Astrocyte of the cerebellum (primary cell): ENCODE measurements at regions of chr3 and their contacts with region 1.

Region 1: GRCh38 chr3:183884427-183885296 is at the start of gene PARL:
- DNase-seq: peak; percentile 70
- H3K4me3 ChIP-seq: peak within 1 kb of the TSS; percentile 78
- CTCF ChIP-seq: peak; percentile 91

Region 2: DNA sequence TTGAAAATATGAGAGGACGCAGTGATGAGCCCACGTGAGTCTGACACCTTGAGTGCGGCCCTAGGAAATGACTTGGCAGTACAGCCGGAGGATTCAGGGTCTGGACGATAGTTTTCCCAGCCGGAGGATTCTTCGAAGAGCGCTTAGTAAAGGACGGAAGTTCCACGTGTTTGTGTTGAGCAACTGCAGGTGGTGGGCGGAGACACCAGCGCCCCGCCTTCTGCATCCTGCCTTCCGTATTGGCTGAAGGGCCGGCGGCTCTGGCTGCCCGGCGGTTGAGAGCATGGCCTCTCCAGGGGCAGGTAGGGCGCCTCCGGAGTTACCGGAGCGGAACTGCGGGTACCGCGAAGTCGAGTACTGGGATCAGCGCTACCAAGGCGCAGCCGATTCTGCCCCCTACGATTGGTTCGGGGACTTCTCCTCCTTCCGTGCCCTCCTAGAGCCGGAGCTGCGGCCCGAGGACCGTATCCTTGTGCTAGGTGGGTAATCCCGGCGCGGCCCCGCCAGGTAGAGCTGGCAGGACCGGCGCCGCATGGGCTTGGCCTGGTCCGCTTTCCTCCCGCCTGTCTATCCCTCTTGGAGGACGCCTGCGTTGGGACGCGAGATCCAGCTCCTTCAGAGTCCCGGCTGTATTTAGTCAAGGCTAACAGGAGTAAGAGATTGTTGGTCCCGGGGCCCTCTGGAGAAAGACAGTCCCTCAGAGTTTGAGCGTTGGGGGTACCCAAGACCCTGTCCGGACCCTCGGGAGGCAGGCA is 364.9 kb after region 1 on chr3 and contains the start of gene EEF1AKMT4:
- in situ Hi-C with region 1: loop called (anchors 25 kb)
- DNase-seq: peak; percentile 95
- H3K4me3 ChIP-seq: peak within 1 kb of the TSS; percentile 95
- CTCF ChIP-seq: peak; percentile 51